Naive thymus-derived CD4-positive, alpha-beta T cell (primary cell): ENCODE measurements at regions of chr5 and their contacts with region 1.

Region 1: DNA sequence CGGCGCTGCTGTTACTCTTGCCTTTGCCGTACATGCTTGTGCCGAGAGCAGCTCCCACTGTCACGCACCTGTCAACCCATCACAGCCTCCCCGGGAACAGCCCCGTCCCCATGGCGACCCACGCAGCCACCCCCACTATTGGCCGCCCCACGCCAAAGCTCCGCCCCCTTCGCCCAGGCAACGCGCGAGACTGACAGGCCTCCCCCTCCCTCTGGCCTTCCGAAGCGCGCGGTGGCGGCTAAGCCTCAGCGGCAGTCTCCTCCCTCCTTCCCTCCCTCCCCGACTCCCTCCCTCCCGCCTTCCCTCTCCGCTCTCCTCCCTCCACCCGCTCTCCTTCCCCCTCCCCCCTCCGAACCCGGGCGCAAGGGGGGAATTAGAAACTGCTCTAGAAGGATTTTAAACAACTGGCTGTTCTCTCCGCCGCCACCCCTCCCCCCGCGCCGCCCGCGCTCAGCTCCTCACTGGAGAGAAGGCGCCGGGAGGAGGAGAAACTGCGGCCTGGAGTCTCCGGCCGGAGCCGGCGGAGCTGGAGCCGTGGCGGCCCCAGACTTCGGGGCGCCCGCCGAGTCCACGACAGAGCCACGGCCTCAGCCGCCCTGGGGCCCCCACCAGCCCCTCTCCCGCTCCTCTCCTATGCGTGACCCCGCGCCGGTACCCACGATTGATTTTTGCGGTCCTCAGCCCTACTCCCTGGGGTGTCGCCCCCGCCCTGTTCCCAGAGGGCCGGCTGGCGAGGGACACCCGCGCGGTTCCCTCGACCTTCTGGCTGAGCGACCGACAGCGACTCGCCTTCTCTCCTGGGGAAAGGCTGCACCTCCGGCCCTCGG is at the start of gene SSBP2:
- DNase-seq: peak; percentile 99 to 100 (median 99)
- ATAC-seq: peak; percentile 93
- H3K4me3 ChIP-seq: peak within 1 kb of the TSS; percentile 61
- H3K4me3 Mint-ChIP-seq: peak within 1 kb of the TSS; percentile 92 to 100 (median 96)
- H3K27ac ChIP-seq: peak within 1 kb of the TSS; percentile 87
- H3K27ac Mint-ChIP-seq: peak within 1 kb of the TSS; percentile 81 to 96 (median 94)
- H3K4me1 ChIP-seq: peaks cover 6 to 13% of the 10 kb centered on the region in 2 donors
- H3K4me1 Mint-ChIP-seq: peaks cover 21 to 49% (median 38%) of the 10 kb centered on the region in 7 donors
- H3K27me3 ChIP-seq: no peaks in the 10 kb centered on the region
- H3K27me3 Mint-ChIP-seq: peaks cover 0 to 49% (median 0%) of the 10 kb centered on the region in 5 donors
- total RNA-seq, gene SSBP2: 36.7 to 73.1 (median 55.9) TPM

Region 2: DNA sequence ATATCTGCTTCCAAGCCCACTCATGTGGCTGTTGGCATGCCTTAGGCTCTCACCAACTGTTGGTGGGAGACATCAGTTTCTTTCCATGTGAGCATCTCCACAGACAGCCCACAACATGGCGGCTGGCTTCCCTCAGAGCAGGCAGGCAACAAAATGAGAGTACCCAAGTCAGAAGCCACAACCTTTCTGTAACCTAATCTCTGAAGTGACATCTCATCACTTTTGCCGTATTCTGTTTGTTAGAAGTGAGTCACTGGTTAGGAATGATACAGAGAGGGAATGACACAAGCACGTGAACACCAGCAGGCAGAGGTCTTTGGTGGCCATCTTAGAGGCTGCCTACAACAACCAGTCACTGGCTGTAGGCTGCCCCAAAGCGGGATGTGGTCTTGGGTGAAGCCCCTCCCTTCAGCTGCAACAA is 879.7 kb before region 1 on chr5:
- CTCF ChIA-PET with region 1: no interaction called
- POLR2A ChIA-PET with region 1: no interaction called
- intact Hi-C with region 1: no loop called
- DNase-seq: peak in 1 of 9 donors; percentile 37
- ATAC-seq: no peak
- H3K4me3 ChIP-seq: no peak overlapping the region
- H3K4me3 Mint-ChIP-seq: no peak overlapping the region
- H3K27ac ChIP-seq: no peak overlapping the region
- H3K27ac Mint-ChIP-seq: no peak overlapping the region
- H3K4me1 ChIP-seq: no peaks in the 10 kb centered on the region
- H3K4me1 Mint-ChIP-seq: peaks cover 0 to 17% (median 0%) of the 10 kb centered on the region in 7 donors
- H3K27me3 ChIP-seq: no peaks in the 10 kb centered on the region
- H3K27me3 Mint-ChIP-seq: no peaks in the 10 kb centered on the region

Region 3: DNA sequence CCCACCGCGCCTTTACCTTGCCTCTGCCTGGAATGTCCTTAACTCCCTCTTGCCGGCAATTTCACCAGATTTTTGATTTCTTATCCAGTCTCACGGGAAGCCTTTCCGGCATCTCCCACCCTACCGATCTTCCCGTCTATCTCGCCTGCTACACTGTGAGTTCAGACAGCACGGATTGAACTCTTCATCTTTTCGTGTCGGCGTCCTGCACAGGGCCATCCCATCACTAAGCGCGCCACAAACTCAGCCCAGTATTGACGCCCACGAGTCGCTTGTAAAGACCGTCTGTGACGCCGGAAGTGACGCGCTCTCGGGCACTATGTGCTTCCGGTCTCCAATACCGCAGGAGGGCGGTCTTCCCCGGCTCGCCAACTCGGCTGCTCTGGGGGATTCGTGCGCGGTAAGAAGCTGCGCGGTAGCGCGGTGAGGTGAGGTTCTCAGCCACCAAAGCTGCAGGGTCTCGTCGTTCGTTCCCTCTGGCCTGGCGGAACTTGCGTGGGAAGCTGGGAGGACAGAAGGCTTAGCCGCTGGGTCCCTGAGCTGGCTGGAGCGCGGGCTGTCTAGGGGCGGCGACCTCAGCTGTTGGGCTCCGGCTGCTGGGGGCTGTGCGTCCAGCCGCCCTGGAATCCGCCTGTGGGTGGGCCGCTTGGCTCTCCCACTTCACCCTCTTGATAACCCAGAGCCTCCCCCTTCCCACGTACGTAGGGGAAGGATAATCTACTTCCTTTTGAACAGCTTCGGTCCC is 449.8 kb before region 1 on chr5 and contains the start of gene ZCCHC9:
- CTCF ChIA-PET with region 1: no interaction called
- POLR2A ChIA-PET with region 1: no interaction called
- intact Hi-C with region 1: loop called (anchors 1 to 2 kb)
- DNase-seq: peak; percentile 84 to 94 (median 90)
- ATAC-seq: peak; percentile 96
- H3K4me3 ChIP-seq: peak within 1 kb of the TSS; percentile 75
- H3K4me3 Mint-ChIP-seq: peak within 1 kb of the TSS; percentile 91 to 99 (median 96)
- H3K27ac ChIP-seq: peak within 1 kb of the TSS; percentile 96
- H3K27ac Mint-ChIP-seq: peak within 1 kb of the TSS; percentile 92 to 99 (median 98)
- H3K4me1 ChIP-seq: peaks cover 14 to 21% of the 10 kb centered on the region in 2 donors
- H3K4me1 Mint-ChIP-seq: peaks cover 34 to 73% (median 55%) of the 10 kb centered on the region in 7 donors
- H3K27me3 ChIP-seq: no peaks in the 10 kb centered on the region
- H3K27me3 Mint-ChIP-seq: no peaks in the 10 kb centered on the region
- total RNA-seq, gene ZCCHC9: 15.5 to 35.1 (median 27.5) TPM

Region 4: GRCh38 chr5:81533629-81534405 is 217.4 kb before region 1 on chr5:
- CTCF ChIA-PET with region 1: no interaction called
- POLR2A ChIA-PET with region 1: interaction called, 3 read pairs
- intact Hi-C with region 1: loop called in 1 of 2 experiments (anchors 1 kb)
- DNase-seq: no peak
- ATAC-seq: no peak
- H3K4me3 ChIP-seq: no peak overlapping the region
- H3K4me3 Mint-ChIP-seq: peak overlapping the region in 9 of 10 donors; percentile 8 to 74 (median 50)
- H3K27ac ChIP-seq: peak overlapping the region; percentile 22
- H3K27ac Mint-ChIP-seq: peak overlapping the region in 8 of 9 donors; percentile 77 to 92 (median 85)
- H3K4me1 ChIP-seq: peaks cover 0 to 38% of the 10 kb centered on the region in 2 donors
- H3K4me1 Mint-ChIP-seq: peaks cover 28 to 98% (median 78%) of the 10 kb centered on the region in 7 donors
- H3K27me3 ChIP-seq: no peaks in the 10 kb centered on the region
- H3K27me3 Mint-ChIP-seq: no peaks in the 10 kb centered on the region

Region 5: DNA sequence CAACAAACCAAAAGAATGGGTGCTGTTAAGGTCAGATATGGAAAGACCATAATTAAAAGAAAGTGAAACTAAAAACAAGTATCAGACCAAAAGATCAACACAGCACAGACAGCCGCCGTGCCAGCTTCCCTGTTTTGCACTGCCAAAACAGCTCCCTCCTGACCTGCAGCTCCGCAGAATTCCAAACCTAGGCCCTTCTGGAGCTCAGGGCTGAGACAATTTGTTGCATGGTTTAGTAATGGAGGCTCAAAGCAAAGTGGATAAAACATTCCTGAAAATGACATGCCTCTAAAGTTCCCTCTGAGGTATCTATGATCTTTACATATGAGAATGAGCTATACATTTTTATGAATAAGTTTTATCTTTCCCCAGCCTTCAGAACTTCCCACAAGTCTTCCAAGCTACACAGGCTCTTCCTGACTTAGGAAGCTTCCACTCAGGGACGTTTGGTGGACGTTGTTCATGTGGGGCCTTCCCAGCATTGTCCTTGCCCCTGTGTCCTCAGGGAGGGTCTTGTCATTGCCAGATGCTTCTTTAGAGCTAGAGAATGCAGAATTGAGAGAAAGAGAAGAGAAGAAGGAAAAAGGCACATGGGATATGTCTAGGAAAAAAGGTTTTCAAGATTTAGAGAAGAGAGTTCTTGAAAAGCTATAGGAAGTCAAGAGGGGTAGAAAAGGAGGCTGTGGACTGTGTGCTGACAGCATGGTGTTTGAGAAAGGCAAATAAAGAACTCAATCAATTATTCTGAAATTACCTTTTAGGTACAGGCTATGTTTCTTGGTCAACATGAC is 28.1 kb after region 1 on chr5:
- CTCF ChIA-PET with region 1: interaction called, 4 read pairs
- POLR2A ChIA-PET with region 1: interaction called, 23 read pairs
- intact Hi-C with region 1: loop called (anchors 1 to 2 kb)
- DNase-seq: peak in 8 of 9 donors; percentile 14 to 48 (median 36)
- ATAC-seq: peak; percentile 74
- H3K4me3 ChIP-seq: peak overlapping the region; percentile 51
- H3K4me3 Mint-ChIP-seq: peak overlapping the region; percentile 82 to 92 (median 88)
- H3K27ac ChIP-seq: peak overlapping the region; percentile 70
- H3K27ac Mint-ChIP-seq: peak overlapping the region; percentile 94 to 100 (median 95)
- H3K4me1 ChIP-seq: peaks cover 5 to 9% of the 10 kb centered on the region in 2 donors
- H3K4me1 Mint-ChIP-seq: peaks cover 9 to 35% (median 29%) of the 10 kb centered on the region in 7 donors
- H3K27me3 ChIP-seq: no peaks in the 10 kb centered on the region
- H3K27me3 Mint-ChIP-seq: no peaks in the 10 kb centered on the region

Region 6: GRCh38 chr5:81971712-81972495 is 220.7 kb after region 1 on chr5 and contains the start of gene ATG10:
- CTCF ChIA-PET with region 1: no interaction called
- POLR2A ChIA-PET with region 1: interaction called, 4 read pairs
- intact Hi-C with region 1: loop called (anchors 1 kb)
- DNase-seq: peak; percentile 78 to 93 (median 84)
- ATAC-seq: peak; percentile 95
- H3K4me3 ChIP-seq: peak within 1 kb of the TSS; percentile 67
- H3K4me3 Mint-ChIP-seq: peak within 1 kb of the TSS; percentile 91 to 100 (median 97)
- H3K27ac ChIP-seq: peak within 1 kb of the TSS; percentile 97
- H3K27ac Mint-ChIP-seq: peak within 1 kb of the TSS; percentile 95 to 99 (median 99)
- H3K4me1 ChIP-seq: peaks cover 5 to 10% of the 10 kb centered on the region in 2 donors
- H3K4me1 Mint-ChIP-seq: peaks cover 9 to 40% (median 33%) of the 10 kb centered on the region in 7 donors
- H3K27me3 ChIP-seq: no peaks in the 10 kb centered on the region
- H3K27me3 Mint-ChIP-seq: no peaks in the 10 kb centered on the region
- total RNA-seq, gene ATG10: 6.4 to 9.6 (median 8.2) TPM

Region 7: GRCh38 chr5:82278095-82278918 is 527.1 kb after region 1 on chr5 and contains the start of gene RPS23:
- CTCF ChIA-PET with region 1: no interaction called
- POLR2A ChIA-PET with region 1: interaction called, 7 read pairs
- intact Hi-C with region 1: loop called (anchors 1 kb)
- DNase-seq: peak; percentile 78 to 90 (median 85)
- ATAC-seq: peak; percentile 96
- H3K4me3 ChIP-seq: peak within 1 kb of the TSS; percentile 72
- H3K4me3 Mint-ChIP-seq: peak within 1 kb of the TSS; percentile 87 to 98 (median 94)
- H3K27ac ChIP-seq: peak within 1 kb of the TSS; percentile 80
- H3K27ac Mint-ChIP-seq: peak within 1 kb of the TSS; percentile 94 to 99 (median 96)
- H3K4me1 ChIP-seq: peaks cover 12 to 16% of the 10 kb centered on the region in 2 donors
- H3K4me1 Mint-ChIP-seq: peaks cover 13 to 65% (median 39%) of the 10 kb centered on the region in 7 donors
- H3K27me3 ChIP-seq: no peaks in the 10 kb centered on the region
- H3K27me3 Mint-ChIP-seq: no peaks in the 10 kb centered on the region
- total RNA-seq, gene RPS23: 2,233 to 4,335 (median 3,874) TPM